Caco-2 (cell line): ENCODE measurements at regions of chr19 and their contacts with region 1.

Region 1: DNA sequence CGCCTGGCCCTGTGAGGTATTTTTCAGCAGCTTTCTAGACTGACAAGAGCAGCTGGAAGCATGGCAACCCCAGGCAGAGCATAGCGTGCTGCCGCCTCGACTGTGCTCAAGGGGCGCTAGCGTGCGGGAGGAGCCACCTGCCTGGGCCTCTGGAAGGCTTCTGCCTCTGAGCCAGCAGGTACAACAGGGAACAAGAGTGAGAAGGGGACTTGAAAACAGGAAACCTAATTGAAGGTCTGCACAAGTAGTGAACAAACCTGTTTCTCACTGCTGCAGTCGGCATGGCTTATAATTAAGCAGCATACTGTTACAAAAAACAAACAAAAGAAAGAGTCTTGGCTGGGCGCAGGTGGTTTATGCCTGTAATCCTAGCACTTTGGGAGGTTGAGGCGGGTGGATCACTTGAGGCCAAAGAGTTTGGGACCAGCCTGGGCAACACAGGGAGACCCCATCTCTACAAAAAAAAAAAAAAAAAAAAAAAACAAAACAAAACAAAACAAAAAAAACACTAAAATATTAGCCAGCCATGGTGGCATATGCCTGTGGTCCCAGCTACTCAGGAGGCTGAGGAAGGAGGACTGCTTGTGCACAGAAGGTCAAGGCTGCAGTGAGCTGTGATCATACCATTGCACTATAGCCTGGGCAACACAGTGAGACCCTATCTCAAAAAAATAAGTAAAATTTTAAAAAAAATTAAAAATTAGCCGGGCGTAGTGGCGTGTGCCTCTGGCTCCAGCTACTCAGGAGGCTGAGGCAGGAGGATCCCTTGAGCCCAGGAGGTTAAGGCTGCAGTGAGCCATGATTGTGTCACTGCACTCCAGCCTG is 12.6 kb upstream of the GARRE1 start:
- DNase-seq: peak; percentile 78 to 79
- H3K4me3 ChIP-seq: no peak overlapping the region
- H3K4me3 Mint-ChIP-seq: no peak overlapping the region
- H3K27ac Mint-ChIP-seq: peak overlapping the region; percentile 46
- H3K4me1 ChIP-seq: no peaks in the 10 kb centered on the region
- H3K4me1 Mint-ChIP-seq: peaks cover 15% of the 10 kb centered on the region
- H3K27me3 ChIP-seq: no peaks in the 10 kb centered on the region
- H3K27me3 Mint-ChIP-seq: no peaks in the 10 kb centered on the region
- CTCF ChIP-seq: peak; percentile 53 to 63

Region 2: GRCh38 chr19:34428549-34429285 is 187.0 kb after region 1 on chr19:
- CTCF ChIA-PET with region 1: no interaction called
- POLR2A ChIA-PET with region 1: no interaction called
- intact Hi-C with region 1: loop called (anchors 1 kb)
- DNase-seq: peak in 1 of 2 experiments; percentile 47
- H3K4me3 ChIP-seq: peak overlapping the region; percentile 82
- H3K4me3 Mint-ChIP-seq: peak overlapping the region; percentile 97
- H3K27ac Mint-ChIP-seq: peak overlapping the region; percentile 86
- H3K4me1 ChIP-seq: peaks cover 13% of the 10 kb centered on the region
- H3K4me1 Mint-ChIP-seq: peaks cover 13% of the 10 kb centered on the region
- H3K27me3 ChIP-seq: no peaks in the 10 kb centered on the region
- H3K27me3 Mint-ChIP-seq: no peaks in the 10 kb centered on the region
- CTCF ChIP-seq: no peak